ENCODE measurements at regions of chr13 and their contacts with region 1.

Region 1: GRCh38 chr13:85586422-85586831 is 212.8 kb downstream of the SLITRK6 start:
- DNase-seq: peak; percentile 99
- H3K4me3 ChIP-seq: no peak overlapping the region
- H3K27ac ChIP-seq: peak overlapping the region; percentile 36
- H3K4me1 ChIP-seq: peaks cover 33% of the 10 kb centered on the region
- H3K27me3 ChIP-seq: no peaks in the 10 kb centered on the region
- CTCF ChIP-seq: no peak

Region 2: GRCh38 chr13:85236431-85236830 is 350.0 kb before region 1 on chr13:
- CTCF ChIA-PET with region 1: no interaction called
- dilution Hi-C with region 1: no loop called
- in situ Hi-C with region 1: no loop called
- intact Hi-C with region 1: loop called (anchors 10 kb)
- DNase-seq: peak; percentile 77
- H3K4me3 ChIP-seq: peak overlapping the region in 1 of 3 experiments; percentile 5
- H3K27ac ChIP-seq: peak overlapping the region; percentile 44
- H3K4me1 ChIP-seq: peaks cover 21% of the 10 kb centered on the region
- H3K27me3 ChIP-seq: no peaks in the 10 kb centered on the region
- CTCF ChIP-seq: no peak

Region 3: GRCh38 chr13:85503790-85504189 is 82.6 kb before region 1 on chr13:
- CTCF ChIA-PET with region 1: no interaction called
- dilution Hi-C with region 1: no loop called
- in situ Hi-C with region 1: no loop called
- intact Hi-C with region 1: loop called (anchors 2 kb)
- DNase-seq: peak; percentile 80
- H3K4me3 ChIP-seq: no peak overlapping the region
- H3K27ac ChIP-seq: peak overlapping the region; percentile 31
- H3K4me1 ChIP-seq: peaks cover 38% of the 10 kb centered on the region
- H3K27me3 ChIP-seq: no peaks in the 10 kb centered on the region
- CTCF ChIP-seq: no peak

Region 4: DNA sequence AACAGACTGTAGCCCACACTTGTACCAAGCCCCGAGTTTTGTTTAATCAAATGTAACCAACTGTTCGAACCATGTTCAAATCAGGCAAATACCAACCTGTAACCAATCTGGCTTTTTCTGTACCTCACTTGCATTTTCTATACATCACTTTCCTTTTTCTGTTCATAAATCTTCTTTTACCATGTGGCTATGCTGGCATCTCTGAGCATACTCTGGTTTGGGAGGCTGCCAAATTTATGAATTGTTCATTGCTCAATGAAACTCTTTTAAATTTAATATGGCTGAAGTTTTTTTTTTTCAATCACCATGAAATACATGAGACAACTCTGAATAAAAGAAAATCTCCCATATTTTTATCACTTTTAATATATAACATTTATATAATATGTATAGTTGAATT is 43.3 kb before region 1 on chr13:
- CTCF ChIA-PET with region 1: no interaction called
- dilution Hi-C with region 1: no loop called
- in situ Hi-C with region 1: no loop called
- intact Hi-C with region 1: loop called (anchors 5 kb)
- DNase-seq: peak; percentile 60
- H3K4me3 ChIP-seq: no peak overlapping the region
- H3K27ac ChIP-seq: no peak overlapping the region
- H3K4me1 ChIP-seq: peaks cover 4% of the 10 kb centered on the region
- H3K27me3 ChIP-seq: no peaks in the 10 kb centered on the region
- CTCF ChIP-seq: no peak

Measured in mammary epithelial cell (primary cell).